Heart right ventricle (tissue), 16 donors: ENCODE measurements at regions of chr7 and their contacts with region 1.

Region 1: GRCh38 chr7:42237162-42237821 is at the start of gene GLI3:
- DNase-seq: peak; percentile 83 to 90
- ATAC-seq: peak; percentile 80 to 94 (median 89)
- H3K4me3 ChIP-seq: peak within 1 kb of the TSS; percentile 47 to 84 (median 76)
- H3K27ac ChIP-seq: peak within 1 kb of the TSS; percentile 71 to 87 (median 82)
- H3K4me1 ChIP-seq: peaks cover 0 to 19% (median 11%) of the 10 kb centered on the region in 9 donors
- H3K27me3 ChIP-seq: peaks cover 0 to 66% (median 0%) of the 10 kb centered on the region in 7 donors
- CTCF ChIP-seq: peak in 6 of 9 donors; percentile 6 to 50 (median 28)
- total RNA-seq, gene GLI3: 2.7 to 9.1 (median 5.5) TPM

Region 2: DNA sequence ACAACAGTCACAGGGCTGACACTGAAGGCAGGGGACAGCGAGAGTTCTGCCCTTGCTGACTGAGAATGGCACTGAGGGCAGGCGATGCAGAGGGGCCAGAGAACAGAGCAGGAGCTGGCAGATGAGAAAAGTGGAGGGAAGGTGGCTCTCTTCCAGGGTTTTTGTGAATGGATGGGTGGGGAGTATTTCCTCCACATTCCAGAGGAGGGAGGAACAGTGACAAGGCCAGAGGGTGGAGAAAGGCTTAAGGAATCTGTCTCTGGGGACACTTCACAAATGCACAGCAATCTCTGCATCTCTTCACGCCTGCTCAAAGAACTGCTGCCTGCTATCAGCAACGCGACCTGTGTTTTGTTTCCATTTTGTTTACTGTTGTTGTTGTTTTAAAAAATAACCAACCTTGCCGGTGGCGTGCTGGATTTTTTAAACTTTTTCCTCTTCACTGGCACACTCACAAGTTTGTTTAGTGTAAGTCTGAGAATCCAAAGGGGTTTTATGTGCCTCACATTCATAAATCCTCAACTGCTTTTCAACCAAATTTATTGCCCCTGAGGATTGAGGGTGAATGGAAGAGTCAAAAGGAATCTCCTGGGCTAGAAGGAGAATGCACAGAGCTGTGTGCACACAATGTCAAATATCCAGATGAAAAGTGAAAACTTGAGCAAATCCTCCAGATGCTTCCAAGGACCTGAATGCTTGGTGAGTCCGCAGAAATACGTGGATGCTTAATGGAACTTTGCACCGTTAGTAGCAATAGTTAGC is 129.6 kb before region 1 on chr7:
- intact Hi-C with region 1: loop called in 1 of 10 experiments (anchors 10 kb)
- DNase-seq: peak in 1 of 2 donors; percentile 23
- ATAC-seq: peak; percentile 48 to 84 (median 69)
- H3K4me3 ChIP-seq: no peak overlapping the region
- H3K27ac ChIP-seq: no peak overlapping the region
- H3K4me1 ChIP-seq: peaks cover 3 to 54% (median 37%) of the 10 kb centered on the region in 9 donors
- H3K27me3 ChIP-seq: no peaks in the 10 kb centered on the region
- CTCF ChIP-seq: no peak